ENCODE measurements at regions of chr2 and their contacts with region 1.

Region 1: GRCh38 chr2:217713395-217714286 is 289.2 kb downstream of the TNS1 start:
- DNase-seq: peak; percentile 59
- H3K4me3 ChIP-seq: no peak overlapping the region
- H3K27ac ChIP-seq: no peak overlapping the region
- H3K4me1 ChIP-seq: peaks cover 26% of the 10 kb centered on the region
- H3K27me3 ChIP-seq: no peaks in the 10 kb centered on the region
- CTCF ChIP-seq: peak; percentile 95 to 98

Region 2: GRCh38 chr2:216683846-216684507 is 1029.7 kb before region 1 on chr2:
- CTCF ChIA-PET with region 1: interaction called, 5 read pairs
- dilution Hi-C with region 1: loop called (anchors 25 kb)
- in situ Hi-C with region 1: loop called (anchors 25 kb)
- intact Hi-C with region 1: loop called (anchors 1 kb)
- DNase-seq: peak; percentile 95
- H3K4me3 ChIP-seq: no peak overlapping the region
- H3K27ac ChIP-seq: peak overlapping the region; percentile 38
- H3K4me1 ChIP-seq: peaks cover 31% of the 10 kb centered on the region
- H3K27me3 ChIP-seq: no peaks in the 10 kb centered on the region
- CTCF ChIP-seq: no peak

Region 3: DNA sequence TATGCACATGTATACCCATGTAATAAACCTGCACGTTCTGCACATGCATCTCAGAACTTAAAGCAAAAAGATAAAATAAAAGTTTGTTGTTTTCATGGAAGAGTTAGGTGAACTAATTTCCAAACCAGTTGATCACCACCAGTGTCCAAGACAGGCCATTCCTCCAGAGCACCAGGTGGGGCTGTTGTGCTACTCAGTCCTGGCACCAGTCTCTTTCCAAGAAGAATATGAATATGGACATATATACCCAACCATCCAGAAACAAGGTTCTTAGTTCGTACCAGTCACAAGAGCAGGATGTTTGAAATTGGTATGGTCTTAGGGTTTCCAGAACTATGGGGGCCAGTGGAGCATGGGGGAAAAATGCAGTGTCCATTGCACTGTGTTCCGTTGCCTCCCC is 836.6 kb before region 1 on chr2:
- CTCF ChIA-PET with region 1: no interaction called
- dilution Hi-C with region 1: no loop called
- in situ Hi-C with region 1: no loop called
- intact Hi-C with region 1: loop called (anchors 1 kb)
- DNase-seq: no peak
- H3K4me3 ChIP-seq: no peak overlapping the region
- H3K27ac ChIP-seq: no peak overlapping the region
- H3K4me1 ChIP-seq: no peaks in the 10 kb centered on the region
- H3K27me3 ChIP-seq: no peaks in the 10 kb centered on the region
- CTCF ChIP-seq: peak; percentile 37 to 55

Region 4: DNA sequence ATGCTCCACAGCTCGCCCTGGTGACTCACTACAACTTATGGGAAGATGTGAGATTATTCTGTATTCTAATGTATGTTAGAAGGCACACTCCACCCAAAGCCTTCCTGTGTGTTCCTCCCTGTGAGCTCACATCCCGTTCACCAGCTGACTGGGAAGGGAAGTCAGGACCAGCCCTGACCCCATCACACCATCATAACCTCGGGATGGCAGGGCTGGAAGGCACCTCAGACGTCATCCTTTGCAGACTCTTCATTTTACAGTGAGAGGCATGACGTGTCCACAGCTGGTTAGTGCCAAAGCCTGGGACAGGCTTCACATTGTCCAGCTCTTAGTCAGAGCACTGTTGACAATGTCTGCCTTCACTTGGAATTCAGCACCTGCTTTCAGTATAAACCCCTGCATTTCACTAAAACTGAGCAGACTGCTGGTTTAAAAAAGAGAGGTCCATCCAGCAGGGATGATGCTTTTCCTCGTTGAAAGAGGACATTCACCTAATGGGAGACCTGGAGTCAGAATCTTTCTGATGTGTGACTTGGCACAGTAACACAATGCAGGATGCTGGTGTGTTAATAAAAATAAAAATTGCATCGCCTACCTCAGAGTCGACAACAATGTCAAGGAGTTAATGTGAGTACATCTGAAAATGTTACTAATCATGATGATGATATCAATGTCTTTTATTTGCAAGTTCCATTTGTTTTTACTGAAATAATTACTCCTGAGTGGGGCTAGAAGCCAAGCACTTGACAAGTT is 435.8 kb before region 1 on chr2:
- CTCF ChIA-PET with region 1: no interaction called
- dilution Hi-C with region 1: no loop called
- in situ Hi-C with region 1: no loop called
- intact Hi-C with region 1: loop called (anchors 5 kb)
- DNase-seq: peak; percentile 92
- H3K4me3 ChIP-seq: no peak overlapping the region
- H3K27ac ChIP-seq: no peak overlapping the region
- H3K4me1 ChIP-seq: peaks cover 31% of the 10 kb centered on the region
- H3K27me3 ChIP-seq: no peaks in the 10 kb centered on the region
- CTCF ChIP-seq: no peak

Region 5: GRCh38 chr2:217510771-217511291 is 202.8 kb before region 1 on chr2:
- CTCF ChIA-PET with region 1: no interaction called
- dilution Hi-C with region 1: no loop called
- in situ Hi-C with region 1: loop called (anchors 5 to 10 kb)
- intact Hi-C with region 1: loop called (anchors 1 kb)
- DNase-seq: peak; percentile 68
- H3K4me3 ChIP-seq: no peak overlapping the region
- H3K27ac ChIP-seq: no peak overlapping the region
- H3K4me1 ChIP-seq: peaks cover 5% of the 10 kb centered on the region
- H3K27me3 ChIP-seq: no peaks in the 10 kb centered on the region
- CTCF ChIP-seq: peak; percentile 64 to 79

Region 6: DNA sequence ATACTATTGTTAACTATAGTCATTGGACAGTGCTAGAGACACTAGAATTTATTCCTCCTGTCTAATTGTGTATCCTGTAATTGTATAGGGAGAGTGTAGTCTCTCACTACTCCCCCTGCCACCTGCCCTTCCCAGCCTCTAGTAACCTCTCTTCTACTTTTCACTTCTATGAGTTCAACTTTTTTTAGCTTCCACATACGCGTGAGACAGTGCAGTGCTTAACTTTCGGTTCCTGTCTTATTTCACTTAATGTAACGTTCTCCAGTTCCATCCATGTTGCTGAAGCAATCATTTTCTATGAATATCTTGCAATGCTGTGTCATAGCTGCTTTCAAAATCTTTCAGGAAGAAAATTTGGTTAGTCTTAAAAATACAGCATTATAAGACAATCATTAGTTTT is 332.6 kb after region 1 on chr2:
- CTCF ChIA-PET with region 1: interaction called, 12 read pairs
- dilution Hi-C with region 1: no loop called
- in situ Hi-C with region 1: no loop called
- intact Hi-C with region 1: no loop called
- DNase-seq: no peak
- H3K4me3 ChIP-seq: no peak overlapping the region
- H3K27ac ChIP-seq: no peak overlapping the region
- H3K4me1 ChIP-seq: no peaks in the 10 kb centered on the region
- H3K27me3 ChIP-seq: peaks cover 17% of the 10 kb centered on the region
- CTCF ChIP-seq: no peak

Measured in mammary epithelial cell (primary cell).